ENCODE measurements at regions of chr5 and their contacts with region 1.

Region 1: DNA sequence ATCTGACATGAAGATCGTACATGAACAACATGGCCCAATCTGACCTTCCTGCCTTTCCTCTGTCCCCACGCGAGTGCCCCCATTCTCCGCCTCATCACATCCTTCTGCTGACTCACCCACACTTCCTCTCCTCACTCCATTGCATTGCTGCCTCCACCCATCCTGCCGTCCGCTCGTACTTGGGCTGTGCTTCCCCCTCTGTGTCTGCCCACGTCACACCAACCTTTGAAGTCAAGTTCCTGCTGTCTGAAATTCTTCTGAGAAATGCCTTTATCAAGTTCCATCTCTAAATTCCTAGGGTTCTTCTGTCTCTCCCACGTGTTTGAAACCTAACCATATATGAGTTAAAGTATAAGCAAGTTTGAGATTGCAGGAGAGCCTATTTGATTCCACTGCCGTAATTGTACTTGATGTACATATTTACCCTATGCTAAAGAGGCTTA is 18.0 kb upstream of the STARD4 start:
- DNase-seq: peak; percentile 48 to 92 (median 85)
- ATAC-seq: peak; percentile 99 to 100 (median 100)
- H3K4me3 ChIP-seq: peak overlapping the region in 1 of 2 donors; percentile 15
- H3K4me3 Mint-ChIP-seq: peak overlapping the region; percentile 60 to 63 (median 63)
- H3K27ac ChIP-seq: peak overlapping the region; percentile 77
- H3K27ac Mint-ChIP-seq: peak overlapping the region; percentile 79
- H3K4me1 ChIP-seq: peaks cover 10 to 12% of the 10 kb centered on the region in 2 experiments
- H3K4me1 Mint-ChIP-seq: peaks cover 18 to 22% (median 20%) of the 10 kb centered on the region in 3 donors
- H3K27me3 ChIP-seq: no peaks in the 10 kb centered on the region
- H3K27me3 Mint-ChIP-seq: no peaks in the 10 kb centered on the region

Region 2: GRCh38 chr5:111486926-111487325 is 43.4 kb before region 1 on chr5:
- CTCF ChIA-PET with region 1: interaction called, 3 to 10 read pairs
- POLR2A ChIA-PET with region 1: interaction called in 1 of 2 experiments, 11 read pairs
- DNase-seq: no peak
- ATAC-seq: no peak
- H3K4me3 ChIP-seq: no peak overlapping the region
- H3K4me3 Mint-ChIP-seq: no peak overlapping the region
- H3K27ac ChIP-seq: no peak overlapping the region
- H3K27ac Mint-ChIP-seq: no peak overlapping the region
- H3K4me1 ChIP-seq: no peaks in the 10 kb centered on the region
- H3K4me1 Mint-ChIP-seq: peaks cover 0 to 4% (median 0%) of the 10 kb centered on the region in 3 donors
- H3K27me3 ChIP-seq: no peaks in the 10 kb centered on the region
- H3K27me3 Mint-ChIP-seq: no peaks in the 10 kb centered on the region

Region 3: GRCh38 chr5:111494364-111494999 is 35.8 kb before region 1 on chr5:
- CTCF ChIA-PET with region 1: interaction called, 6 to 10 read pairs
- POLR2A ChIA-PET with region 1: interaction called in 1 of 2 experiments, 5 read pairs
- DNase-seq: no peak
- ATAC-seq: no peak
- H3K4me3 ChIP-seq: no peak overlapping the region
- H3K4me3 Mint-ChIP-seq: no peak overlapping the region
- H3K27ac ChIP-seq: no peak overlapping the region
- H3K27ac Mint-ChIP-seq: peak overlapping the region; percentile 46 to 53
- H3K4me1 ChIP-seq: no peaks in the 10 kb centered on the region
- H3K4me1 Mint-ChIP-seq: peaks cover 13 to 25% (median 24%) of the 10 kb centered on the region in 3 donors
- H3K27me3 ChIP-seq: no peaks in the 10 kb centered on the region
- H3K27me3 Mint-ChIP-seq: no peaks in the 10 kb centered on the region

Region 4: DNA sequence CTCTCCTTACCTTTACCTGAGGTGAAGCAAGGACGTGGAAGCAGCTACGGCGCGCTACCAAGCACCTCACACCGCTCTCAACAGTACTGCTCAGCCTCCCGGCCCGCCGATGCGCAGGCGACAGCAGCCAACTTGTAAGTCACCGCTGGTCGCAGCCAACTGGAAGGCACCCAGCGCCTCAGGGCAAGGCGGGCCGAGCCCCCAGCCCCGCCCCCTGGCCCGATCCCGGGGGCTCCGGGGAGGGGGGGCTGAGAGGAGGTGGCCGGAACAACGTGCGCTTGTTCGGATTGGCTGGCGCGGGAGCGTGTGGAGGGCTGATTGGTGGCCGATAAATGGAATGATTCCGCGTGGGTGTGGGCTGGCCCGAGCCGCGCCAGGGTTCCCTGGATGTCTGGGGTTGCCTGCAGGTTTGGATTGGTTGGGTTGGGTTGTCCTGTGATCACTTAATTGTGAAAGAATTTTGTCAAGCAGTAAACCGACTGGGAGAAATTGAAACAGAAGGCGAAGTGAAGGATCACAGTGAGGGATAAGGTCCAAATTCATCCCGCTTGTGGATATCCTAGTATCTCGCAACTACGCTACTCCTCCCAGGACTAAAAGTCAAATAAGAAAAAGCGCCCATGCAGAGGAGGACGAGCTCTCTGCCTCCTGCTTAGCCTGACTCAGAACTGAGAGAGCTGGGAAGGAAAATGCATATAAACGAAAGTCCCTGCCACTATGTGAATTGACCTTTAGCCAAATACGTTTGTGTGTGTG is 17.8 kb before region 1 on chr5 and contains the start of gene STARD4:
- CTCF ChIA-PET with region 1: interaction called, 7 to 14 read pairs
- POLR2A ChIA-PET with region 1: interaction called, 4 to 6 read pairs
- DNase-seq: peak; percentile 84 to 96 (median 91)
- ATAC-seq: peak; percentile 93 to 97 (median 94)
- H3K4me3 ChIP-seq: peak within 1 kb of the TSS; percentile 77 to 93
- H3K4me3 Mint-ChIP-seq: peak within 1 kb of the TSS; percentile 98 to 99 (median 99)
- H3K27ac ChIP-seq: peak within 1 kb of the TSS; percentile 81
- H3K27ac Mint-ChIP-seq: peak within 1 kb of the TSS; percentile 95 to 99
- H3K4me1 ChIP-seq: peaks cover 9 to 11% of the 10 kb centered on the region in 2 experiments
- H3K4me1 Mint-ChIP-seq: peaks cover 19 to 47% (median 43%) of the 10 kb centered on the region in 3 donors
- H3K27me3 ChIP-seq: no peaks in the 10 kb centered on the region
- H3K27me3 Mint-ChIP-seq: no peaks in the 10 kb centered on the region
- total RNA-seq, gene STARD4: 10.2 to 16.5 (median 12.0) TPM

Region 5: GRCh38 chr5:111550279-111551020 is 20.1 kb after region 1 on chr5:
- CTCF ChIA-PET with region 1: interaction called, 8 to 22 read pairs
- POLR2A ChIA-PET with region 1: no interaction called
- DNase-seq: peak in 34 of 35 experiments; percentile 22 to 80 (median 48)
- ATAC-seq: peak; percentile 83 to 95 (median 85)
- H3K4me3 ChIP-seq: no peak overlapping the region
- H3K4me3 Mint-ChIP-seq: no peak overlapping the region
- H3K27ac ChIP-seq: no peak overlapping the region
- H3K27ac Mint-ChIP-seq: no peak overlapping the region
- H3K4me1 ChIP-seq: peaks cover 0 to 8% of the 10 kb centered on the region in 2 experiments
- H3K4me1 Mint-ChIP-seq: peaks cover 14 to 19% (median 18%) of the 10 kb centered on the region in 3 donors
- H3K27me3 ChIP-seq: no peaks in the 10 kb centered on the region
- H3K27me3 Mint-ChIP-seq: peaks cover 3 to 5% of the 10 kb centered on the region in 2 donors

Measured in T-cell (primary cell).